CD8-positive, alpha-beta T cell (primary cell): ENCODE measurements at regions of chr5 and their contacts with region 1.

Region 1: GRCh38 chr5:74974451-74975091 is 77.8 kb downstream of the GCNT4 start:
- DNase-seq: peak in 7 of 9 experiments; percentile 7 to 72 (median 42)
- ATAC-seq: peak; percentile 75
- H3K4me3 ChIP-seq: no peak overlapping the region
- H3K4me3 Mint-ChIP-seq: peak overlapping the region; percentile 38
- H3K27ac ChIP-seq: peak overlapping the region in 1 of 2 experiments; percentile 80
- H3K27ac Mint-ChIP-seq: peak overlapping the region; percentile 89
- H3K4me1 ChIP-seq: peaks cover 24% of the 10 kb centered on the region
- H3K4me1 Mint-ChIP-seq: peaks cover 45% of the 10 kb centered on the region
- H3K27me3 ChIP-seq: no peaks in the 10 kb centered on the region
- H3K27me3 Mint-ChIP-seq: no peaks in the 10 kb centered on the region
- CTCF ChIP-seq: no peak

Region 2: DNA sequence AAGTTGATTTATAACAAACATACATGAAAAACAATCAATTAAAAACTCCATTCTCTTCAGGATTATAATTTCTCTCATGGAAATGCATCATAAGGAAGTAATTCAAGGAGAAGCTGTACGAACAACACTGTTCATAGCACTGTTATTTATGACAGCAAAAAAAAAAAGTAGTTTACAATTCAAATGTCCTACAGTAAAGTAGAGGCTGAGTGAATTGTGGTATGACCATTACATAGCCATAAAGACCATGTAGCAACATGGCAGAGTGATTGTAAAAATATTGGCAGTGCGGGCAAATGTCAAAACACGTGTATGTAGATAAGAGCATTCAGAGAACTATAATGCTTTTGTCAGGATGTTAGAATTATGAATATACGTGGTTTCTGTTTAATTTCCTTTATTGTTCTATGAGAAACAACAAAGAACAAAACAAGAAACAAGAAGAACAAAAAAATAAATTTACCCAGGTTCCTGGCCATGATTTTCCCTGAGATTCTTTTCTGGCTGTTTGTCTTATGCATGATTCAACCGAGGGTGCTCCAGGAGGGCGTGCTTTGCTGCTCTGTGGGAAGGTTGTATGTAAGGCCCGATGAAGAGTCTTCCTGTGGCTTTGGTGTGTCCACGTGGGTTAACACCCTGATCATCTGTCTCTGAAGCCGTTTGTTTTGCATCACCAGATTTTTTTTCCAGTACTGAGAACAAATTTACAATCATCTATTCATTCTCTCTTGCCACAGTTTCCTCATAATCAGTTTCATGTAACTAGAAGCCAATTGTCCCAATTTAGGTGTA is 49.0 kb after region 1 on chr5:
- CTCF ChIA-PET with region 1: no interaction called
- POLR2A ChIA-PET with region 1: no interaction called
- intact Hi-C with region 1: loop called in 1 of 2 experiments (anchors 5 kb)
- DNase-seq: peak in 8 of 9 experiments; percentile 18 to 81 (median 52)
- ATAC-seq: peak; percentile 79
- H3K4me3 ChIP-seq: no peak overlapping the region
- H3K4me3 Mint-ChIP-seq: peak overlapping the region; percentile 63
- H3K27ac ChIP-seq: peak overlapping the region in 1 of 2 experiments; percentile 42
- H3K27ac Mint-ChIP-seq: peak overlapping the region; percentile 90
- H3K4me1 ChIP-seq: peaks cover 34% of the 10 kb centered on the region
- H3K4me1 Mint-ChIP-seq: peaks cover 55% of the 10 kb centered on the region
- H3K27me3 ChIP-seq: no peaks in the 10 kb centered on the region
- H3K27me3 Mint-ChIP-seq: no peaks in the 10 kb centered on the region
- CTCF ChIP-seq: no peak